ENCODE measurements at regions of chr11 and their contacts with region 1.

Region 1: GRCh38 chr11:65418711-65419459 is 3.7 kb upstream of the NEAT1 start:
- DNase-seq: peak; percentile 92
- H3K4me3 ChIP-seq: peak overlapping the region; percentile 33
- H3K27me3 ChIP-seq: no peaks in the 10 kb centered on the region
- CTCF ChIP-seq: no peak

Region 2: GRCh38 chr11:65243773-65244172 is 175.1 kb before region 1 on chr11:
- CTCF ChIA-PET with region 1: no interaction called
- POLR2A ChIA-PET with region 1: no interaction called
- DNase-seq: no peak
- H3K4me3 ChIP-seq: no peak overlapping the region
- H3K27me3 ChIP-seq: peaks cover 1% of the 10 kb centered on the region; the same call in 1 of the 2 replicates
- CTCF ChIP-seq: no peak

Region 3: GRCh38 chr11:65329944-65330403 is 88.9 kb before region 1 on chr11:
- CTCF ChIA-PET with region 1: interaction called, 3 read pairs
- POLR2A ChIA-PET with region 1: interaction called, 13 read pairs
- DNase-seq: no peak
- H3K4me3 ChIP-seq: no peak overlapping the region
- H3K27me3 ChIP-seq: no peaks in the 10 kb centered on the region
- CTCF ChIP-seq: peak; percentile 71

Region 4: GRCh38 chr11:65391007-65391406 is 27.9 kb before region 1 on chr11:
- CTCF ChIA-PET with region 1: interaction called, 29 read pairs
- POLR2A ChIA-PET with region 1: interaction called, 9 read pairs
- DNase-seq: no peak
- H3K4me3 ChIP-seq: peak overlapping the region; percentile 1; the same call in 1 of the 2 replicates
- H3K27me3 ChIP-seq: no peaks in the 10 kb centered on the region
- CTCF ChIP-seq: 0 out of 2 replicates have a peak, but pooled peaks have one; percentile 19

Region 5: GRCh38 chr11:65477149-65477965 is 58.5 kb after region 1 on chr11:
- CTCF ChIA-PET with region 1: interaction called, 23 read pairs
- POLR2A ChIA-PET with region 1: interaction called, 22 read pairs
- DNase-seq: no peak
- H3K4me3 ChIP-seq: peak overlapping the region; percentile 79
- H3K27me3 ChIP-seq: no peaks in the 10 kb centered on the region
- CTCF ChIP-seq: no peak

Region 6: DNA sequence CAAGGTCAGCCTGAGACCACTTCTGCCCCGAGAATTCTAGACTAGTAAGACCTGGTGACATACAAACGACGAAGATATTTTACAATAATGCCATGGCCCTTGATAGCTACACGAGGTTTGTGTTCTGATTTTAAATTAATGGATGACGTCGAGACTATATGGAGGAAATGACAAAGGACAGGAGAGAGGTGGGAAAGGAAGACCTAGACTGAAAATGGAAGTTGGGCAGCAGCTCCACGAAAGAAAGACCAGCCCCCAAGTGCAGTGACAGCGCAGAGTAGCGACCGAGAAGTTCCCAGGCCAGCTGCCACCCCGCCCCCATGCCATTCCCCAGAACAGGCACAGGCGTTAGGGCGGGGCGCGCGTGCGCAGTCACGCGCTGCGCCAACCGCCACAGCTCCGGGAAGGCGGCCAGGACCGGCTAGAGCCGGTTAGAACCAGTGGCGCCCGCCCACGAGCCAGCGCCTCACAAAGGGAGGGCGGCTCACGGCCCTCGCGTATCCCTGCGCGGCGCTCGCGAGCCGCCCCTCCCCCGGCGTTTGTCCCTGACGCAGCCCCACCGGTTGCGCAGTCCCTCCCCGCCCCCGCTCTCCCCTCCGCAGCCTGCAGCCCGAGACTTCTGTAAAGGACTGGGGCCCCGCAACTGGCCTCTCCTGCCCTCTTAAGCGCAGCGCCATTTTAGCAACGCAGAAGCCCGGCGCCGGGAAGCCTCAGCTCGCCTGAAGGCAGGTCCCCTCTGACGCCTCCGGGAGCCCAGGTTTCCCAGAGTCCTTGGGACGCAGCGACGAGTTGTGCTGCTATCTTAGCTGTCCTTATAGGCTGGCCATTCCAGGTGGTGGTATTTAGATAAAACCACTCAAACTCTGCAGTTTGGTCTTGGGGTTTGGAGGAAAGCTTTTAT is 78.5 kb after region 1 on chr11:
- CTCF ChIA-PET with region 1: interaction called, 26 read pairs
- POLR2A ChIA-PET with region 1: interaction called, 204 read pairs
- DNase-seq: peak; percentile 89
- H3K4me3 ChIP-seq: peak overlapping the region; percentile 63
- H3K27me3 ChIP-seq: no peaks in the 10 kb centered on the region
- CTCF ChIP-seq: no peak; the same call in 1 of the 2 replicates

Region 7: GRCh38 chr11:66126808-66127555 is 708.1 kb after region 1 on chr11:
- CTCF ChIA-PET with region 1: no interaction called
- POLR2A ChIA-PET with region 1: interaction called, 10 read pairs
- DNase-seq: peak; percentile 20
- H3K4me3 ChIP-seq: no peak overlapping the region
- H3K27me3 ChIP-seq: no peaks in the 10 kb centered on the region
- CTCF ChIP-seq: peak; percentile 26; the same call in 1 of the 2 replicates